H1 (cell line): ENCODE measurements at regions of chr7 and their contacts with region 1.

Region 1: GRCh38 chr7:150898475-150899011 is 46.2 kb downstream of the AOC1 start:
- DNase-seq: peak; percentile 60 to 96
- H3K4me3 ChIP-seq: no peak overlapping the region
- H3K27ac ChIP-seq: no peak overlapping the region
- H3K4me1 ChIP-seq: peaks cover 0 to 28% (median 7%) of the 10 kb centered on the region in 4 experiments; a peak in 4 of 7 replicates
- H3K27me3 ChIP-seq: peaks cover 0 to 11% (median 6%) of the 10 kb centered on the region in 4 experiments; a peak in 4 of 7 replicates
- CTCF ChIP-seq: peak; percentile 92 to 97 (median 96)
- EP300 ChIP-seq: no peak
- POLR2A ChIP-seq: no peak
- RAD21 ChIP-seq: peak; percentile 81 to 88

Region 2: DNA sequence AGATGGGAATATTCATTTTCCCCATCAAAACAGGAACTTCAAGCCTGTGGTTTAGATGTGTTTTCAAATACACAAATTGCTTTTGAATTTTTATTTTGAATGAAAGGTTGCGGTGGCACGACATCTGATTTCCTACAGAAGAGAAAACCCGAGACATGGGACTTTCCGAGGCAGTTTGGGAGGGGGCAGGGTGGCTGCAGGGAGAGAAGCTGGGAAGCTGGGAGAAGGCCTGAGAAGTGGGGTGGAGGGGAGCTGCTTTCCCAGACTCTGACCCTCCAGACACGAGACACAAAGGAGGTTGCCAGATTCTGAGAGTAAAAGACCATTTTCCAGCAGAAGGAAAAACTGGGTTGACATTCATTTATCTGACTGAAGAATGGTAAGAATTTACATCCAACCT is 78.4 kb before region 1 on chr7:
- CTCF ChIA-PET with region 1: no interaction called
- POLR2A ChIA-PET with region 1: no interaction called
- DNase-seq: no peak
- H3K4me3 ChIP-seq: no peak overlapping the region
- H3K27ac ChIP-seq: no peak overlapping the region
- H3K4me1 ChIP-seq: peaks cover 0 to 7% (median 0%) of the 10 kb centered on the region in 4 experiments; a peak in 3 of 7 replicates
- H3K27me3 ChIP-seq: no peaks in the 10 kb centered on the region; a peak in 2 of 7 replicates
- CTCF ChIP-seq: no peak
- EP300 ChIP-seq: no peak
- POLR2A ChIP-seq: no peak
- RAD21 ChIP-seq: no peak

Region 3: GRCh38 chr7:150876817-150877526 is 21.6 kb before region 1 on chr7:
- CTCF ChIA-PET with region 1: interaction called, 35 read pairs
- POLR2A ChIA-PET with region 1: interaction called, 4 read pairs
- DNase-seq: peak; percentile 62 to 79
- H3K4me3 ChIP-seq: peak overlapping the region; percentile 6 to 52 (median 29); a peak in 6 of 8 replicates
- H3K27ac ChIP-seq: peak overlapping the region; percentile 91; the same call in 1 of the 2 replicates
- H3K4me1 ChIP-seq: 0 out of 7 replicates have a peak, but pooled peaks cover 0 to 7% (median 0%) of the 10 kb centered on the region in 4 experiments
- H3K27me3 ChIP-seq: no peaks in the 10 kb centered on the region; a peak in 1 of 7 replicates
- CTCF ChIP-seq: peak; percentile 66 to 78 (median 72)
- EP300 ChIP-seq: 0 out of 3 replicates have a peak, but pooled peaks of 1 of the 2 experiments have one; percentile 46
- POLR2A ChIP-seq: peak; percentile 50 to 81
- RAD21 ChIP-seq: peak; percentile 58 to 59

Region 4: DNA sequence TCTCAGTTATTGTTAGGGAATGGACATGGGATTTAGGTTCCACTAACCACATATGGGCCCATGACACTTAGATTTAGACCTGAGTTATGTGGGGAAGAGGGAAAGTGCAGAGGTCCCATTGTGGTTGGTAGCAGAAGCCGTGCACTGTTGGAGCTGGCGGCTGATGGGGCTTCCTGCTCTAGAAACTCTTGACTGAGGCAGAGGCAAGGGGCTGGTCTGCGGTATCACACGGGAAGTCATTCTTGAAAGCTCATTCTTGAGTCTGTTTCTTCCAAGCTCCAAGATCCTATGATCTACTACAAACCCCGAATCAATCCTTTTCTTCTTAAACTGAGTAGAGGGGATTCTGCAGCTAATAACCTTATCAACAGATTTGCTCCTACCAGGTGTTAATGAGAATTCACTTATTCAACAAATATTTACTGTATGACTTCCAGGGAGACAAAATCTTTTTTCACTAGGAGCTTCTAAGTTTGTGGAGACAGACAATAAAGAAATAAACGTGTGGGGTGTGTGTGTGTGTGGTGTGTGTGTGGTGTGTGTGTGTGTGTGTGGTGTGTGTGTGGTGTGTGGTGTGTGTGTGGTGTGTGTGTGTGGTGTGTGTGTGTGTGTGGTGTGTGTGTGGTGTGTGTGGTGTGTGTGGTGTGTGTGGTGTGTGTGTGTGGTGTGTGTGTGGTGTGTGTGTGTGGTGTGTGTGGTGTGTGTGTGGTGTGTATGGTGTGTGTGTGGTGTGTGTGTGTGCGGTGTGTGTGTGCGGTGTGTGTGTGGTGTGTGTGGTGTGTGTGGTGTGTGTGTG is 10.9 kb after region 1 on chr7:
- CTCF ChIA-PET with region 1: interaction called, 27 read pairs
- POLR2A ChIA-PET with region 1: interaction called, 3 read pairs
- DNase-seq: no peak
- H3K4me3 ChIP-seq: no peak overlapping the region
- H3K27ac ChIP-seq: no peak overlapping the region
- H3K4me1 ChIP-seq: peaks cover 0 to 8% (median 0%) of the 10 kb centered on the region in 4 experiments; a peak in 2 of 7 replicates
- H3K27me3 ChIP-seq: no peaks in the 10 kb centered on the region; a peak in 1 of 7 replicates
- CTCF ChIP-seq: no peak
- EP300 ChIP-seq: no peak
- POLR2A ChIP-seq: no peak
- RAD21 ChIP-seq: no peak

Region 5: DNA sequence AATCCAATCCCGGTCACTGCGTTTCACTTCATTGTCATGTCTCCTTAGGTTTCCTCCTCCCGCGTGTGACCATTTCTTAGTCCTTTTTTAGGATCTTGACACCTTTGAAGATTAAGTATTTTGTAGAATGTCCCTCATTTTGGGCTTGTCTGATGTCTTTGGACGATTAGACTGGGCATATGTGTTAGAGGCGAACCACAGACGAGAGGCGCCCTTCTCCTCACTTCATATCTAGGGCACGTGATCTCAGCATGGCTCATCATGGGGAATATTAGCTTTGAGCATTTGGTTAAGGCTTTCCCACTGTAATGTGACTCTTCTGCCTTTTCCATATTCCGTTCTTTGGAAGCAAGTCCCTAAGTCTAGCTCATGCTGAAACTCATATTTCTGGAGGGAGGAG is 20.6 kb after region 1 on chr7:
- CTCF ChIA-PET with region 1: interaction called, 22 read pairs
- POLR2A ChIA-PET with region 1: no interaction called
- DNase-seq: no peak
- H3K4me3 ChIP-seq: no peak overlapping the region
- H3K27ac ChIP-seq: no peak overlapping the region
- H3K4me1 ChIP-seq: no peaks in the 10 kb centered on the region; a peak in 1 of 7 replicates
- H3K27me3 ChIP-seq: no peaks in the 10 kb centered on the region
- CTCF ChIP-seq: no peak
- EP300 ChIP-seq: no peak
- POLR2A ChIP-seq: no peak
- RAD21 ChIP-seq: no peak

Region 6: GRCh38 chr7:150941981-150942590 is 43.5 kb after region 1 on chr7:
- CTCF ChIA-PET with region 1: interaction called, 14 read pairs
- POLR2A ChIA-PET with region 1: no interaction called
- DNase-seq: no peak
- H3K4me3 ChIP-seq: no peak overlapping the region
- H3K27ac ChIP-seq: no peak overlapping the region
- H3K4me1 ChIP-seq: peaks cover 0 to 24% (median 12%) of the 10 kb centered on the region in 4 experiments; a peak in 6 of 7 replicates
- H3K27me3 ChIP-seq: peaks cover 0 to 9% (median 4%) of the 10 kb centered on the region in 4 experiments; a peak in 2 of 7 replicates
- CTCF ChIP-seq: no peak
- EP300 ChIP-seq: no peak
- POLR2A ChIP-seq: no peak
- RAD21 ChIP-seq: no peak

Region 7: GRCh38 chr7:150980663-150981062 is 82.1 kb after region 1 on chr7:
- CTCF ChIA-PET with region 1: interaction called, 32 read pairs
- POLR2A ChIA-PET with region 1: no interaction called
- DNase-seq: no peak
- H3K4me3 ChIP-seq: no peak overlapping the region
- H3K27ac ChIP-seq: no peak overlapping the region
- H3K4me1 ChIP-seq: peaks cover 11 to 33% (median 25%) of the 10 kb centered on the region in 4 experiments
- H3K27me3 ChIP-seq: peaks cover 2 to 31% (median 26%) of the 10 kb centered on the region in 4 experiments
- CTCF ChIP-seq: peak in 2 of 3 experiments; percentile 50 to 63; a peak in 3 of 4 replicates
- EP300 ChIP-seq: no peak
- POLR2A ChIP-seq: no peak
- RAD21 ChIP-seq: peak; percentile 68 to 80

Region 8: GRCh38 chr7:150988230-150989226 is 90.0 kb after region 1 on chr7:
- CTCF ChIA-PET with region 1: interaction called, 32 read pairs
- POLR2A ChIA-PET with region 1: interaction called, 3 read pairs
- DNase-seq: peak in 1 of 2 experiments; percentile 98
- H3K4me3 ChIP-seq: peak overlapping the region in 3 of 4 experiments; percentile 30 to 55 (median 42); a peak in 7 of 8 replicates
- H3K27ac ChIP-seq: no peak overlapping the region; the same call in 1 of the 2 replicates
- H3K4me1 ChIP-seq: peaks cover 4 to 17% (median 11%) of the 10 kb centered on the region in 4 experiments
- H3K27me3 ChIP-seq: no peaks in the 10 kb centered on the region
- CTCF ChIP-seq: peak in 2 of 3 experiments; percentile 92 to 97; a peak in 3 of 4 replicates
- EP300 ChIP-seq: no peak
- POLR2A ChIP-seq: no peak
- RAD21 ChIP-seq: peak; percentile 89 to 96